KBM-7 (cell line): ENCODE measurements at regions of chr6 and their contacts with region 1.

Region 1: GRCh38 chr6:36765594-36766398 is 68.2 kb downstream of the RAB44 start:
- DNase-seq: peak; percentile 79

Region 2: GRCh38 chr6:36399970-36400369 is 365.8 kb before region 1 on chr6:
- in situ Hi-C with region 1: no loop called
- DNase-seq: no peak

Region 3: GRCh38 chr6:36839749-36840431 is 74.1 kb after region 1 on chr6:
- in situ Hi-C with region 1: loop called (anchors 10 kb)
- DNase-seq: no peak

Region 4: DNA sequence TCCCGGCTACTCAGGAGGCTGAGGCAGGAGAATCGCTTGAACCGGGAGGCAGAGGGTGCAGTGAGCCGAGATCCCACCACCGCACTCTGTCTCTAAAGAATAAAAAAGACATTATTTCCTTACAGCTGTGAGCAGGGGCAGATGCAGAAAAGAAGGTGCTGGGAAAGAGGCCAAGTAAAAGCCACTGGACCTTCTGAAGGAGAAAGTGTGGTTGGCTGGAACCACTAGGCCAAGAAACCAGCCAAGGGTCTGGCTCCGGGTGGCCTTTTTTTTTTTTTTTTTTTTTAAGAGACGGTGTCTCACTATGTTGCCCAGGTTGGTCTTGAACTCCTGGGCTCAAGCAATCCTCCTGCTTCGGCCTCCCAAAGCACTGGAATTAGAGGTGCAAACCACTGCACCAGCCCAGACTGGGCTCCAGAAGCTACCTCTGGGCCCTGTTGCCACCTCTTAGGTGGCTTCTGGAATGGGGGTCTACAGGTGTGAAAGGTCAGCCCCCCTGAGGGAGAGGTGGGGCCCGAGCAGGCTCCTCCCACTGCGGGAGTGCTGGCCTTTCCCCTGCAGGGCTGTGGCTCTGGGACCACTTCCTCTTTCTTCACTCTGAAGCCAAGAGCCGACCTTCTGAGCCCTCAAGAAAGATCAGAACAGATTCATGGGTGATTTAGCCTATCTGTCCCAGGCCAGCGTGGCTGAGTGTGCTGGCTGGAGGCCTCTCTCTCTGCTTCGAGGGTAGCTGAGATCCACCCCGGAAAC is 239.4 kb after region 1 on chr6 and contains the start of gene FGD2:
- in situ Hi-C with region 1: loop called (anchors 10 kb)
- DNase-seq: peak; percentile 70

Region 5: GRCh38 chr6:37222125-37222967 is 456.6 kb after region 1 on chr6:
- in situ Hi-C with region 1: loop called (anchors 25 kb)
- DNase-seq: peak; percentile 94